Breast epithelium (tissue), 4 donors: ENCODE measurements at regions of chr22 and their contacts with region 1.

Region 1: GRCh38 chr22:31084811-31085497 is 3.8 kb downstream of the SMTN start:
- DNase-seq: peak; percentile 90 to 91
- H3K4me3 ChIP-seq: peak overlapping the region; percentile 58 to 85 (median 69)
- H3K27ac ChIP-seq: peak overlapping the region; percentile 94 to 97
- H3K4me1 ChIP-seq: peaks cover 0 to 29% of the 10 kb centered on the region in 2 donors
- H3K27me3 ChIP-seq: no peaks in the 10 kb centered on the region
- CTCF ChIP-seq: peak; percentile 67 to 87 (median 81)
- POLR2A ChIP-seq: peak; percentile 26

Region 2: DNA sequence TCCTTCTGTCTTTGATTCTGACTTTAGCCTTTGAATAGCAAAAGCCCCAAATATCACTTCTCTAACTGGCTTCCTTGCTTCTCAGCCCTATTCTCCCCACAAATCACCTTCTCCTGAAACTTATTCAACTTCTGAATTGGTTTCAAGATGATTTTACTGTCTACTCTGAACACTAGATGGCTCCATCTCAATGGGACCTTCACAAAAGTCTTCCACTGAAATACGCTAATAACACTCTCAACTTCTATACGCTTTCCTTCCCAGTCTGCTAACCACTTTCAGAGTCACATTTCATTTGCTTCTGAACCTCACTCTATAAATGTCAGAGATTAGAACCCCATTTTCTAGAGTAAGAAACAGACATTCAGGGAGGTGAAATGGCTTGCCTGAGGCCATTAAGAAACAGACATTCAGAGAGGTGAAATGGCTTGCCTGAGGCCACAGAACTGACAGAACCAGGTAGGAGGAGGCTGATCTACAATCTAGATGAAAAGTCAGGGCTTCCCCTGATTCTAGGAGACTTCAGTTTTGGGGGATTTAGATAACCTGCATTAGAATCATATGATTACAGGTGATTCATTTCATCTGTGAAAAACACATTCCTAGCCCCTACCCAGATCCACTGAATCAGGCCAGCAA is 137.0 kb before region 1 on chr22:
- intact Hi-C with region 1: loop called (anchors 2 kb)
- DNase-seq: no peak
- H3K4me3 ChIP-seq: no peak overlapping the region
- H3K27ac ChIP-seq: peak overlapping the region; percentile 61 to 92
- H3K4me1 ChIP-seq: peaks cover 0 to 4% of the 10 kb centered on the region in 2 donors
- H3K27me3 ChIP-seq: no peaks in the 10 kb centered on the region
- CTCF ChIP-seq: peak; percentile 31 to 69 (median 66)
- POLR2A ChIP-seq: no peak